Sigmoid colon (tissue), 7 donors: ENCODE measurements at regions of chr16 and their contacts with region 1.

Region 1: DNA sequence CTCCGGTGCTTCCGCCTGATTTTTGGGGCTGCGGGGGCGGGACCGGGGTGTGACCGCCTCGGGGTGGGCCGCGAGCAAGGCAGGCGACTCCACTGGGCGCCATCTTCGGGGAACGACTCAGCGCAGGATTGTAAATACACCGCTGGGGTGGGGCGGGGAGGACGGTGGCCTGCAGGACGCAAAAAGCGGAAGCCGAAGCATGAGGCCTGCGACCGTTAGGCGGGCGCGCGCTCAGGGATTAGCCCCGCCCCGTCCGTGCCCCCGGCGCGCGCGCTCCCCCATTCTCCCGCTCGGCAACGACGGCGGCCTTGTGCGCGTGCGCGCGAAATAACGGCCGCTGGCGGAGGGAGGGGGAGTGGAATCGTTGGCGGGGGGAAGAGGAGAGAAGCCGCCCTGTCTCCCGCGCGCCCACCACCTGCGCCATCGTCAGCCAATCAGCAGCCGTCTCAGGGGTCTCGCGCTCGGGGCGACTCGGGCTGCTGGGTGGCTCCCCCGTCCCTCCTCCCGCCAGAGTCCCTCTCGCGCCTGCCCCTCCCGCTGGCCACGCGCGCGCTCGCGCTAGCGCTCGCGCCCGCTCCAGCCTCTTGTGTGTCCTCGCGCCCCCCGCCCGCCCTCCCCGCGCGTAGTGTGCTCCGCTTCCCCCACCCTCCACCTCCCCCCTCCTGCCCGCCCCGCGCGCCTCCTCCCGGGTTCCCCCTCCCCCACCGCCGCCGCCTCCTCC is 791 bp upstream of the MAZ start:
- DNase-seq: peak; percentile 99
- H3K4me3 ChIP-seq: peak overlapping the region; percentile 59 to 76 (median 66)
- H3K27ac ChIP-seq: peak overlapping the region; percentile 91 to 99 (median 93)
- H3K4me1 ChIP-seq: peaks cover 0 to 44% (median 42%) of the 10 kb centered on the region in 4 donors
- H3K27me3 ChIP-seq: no peaks in the 10 kb centered on the region
- CTCF ChIP-seq: no peak
- EP300 ChIP-seq: peak in 2 of 4 donors; percentile 48 to 71
- POLR2A ChIP-seq: peak; percentile 92 to 97

Region 2: GRCh38 chr16:29720699-29721098 is 84.8 kb before region 1 on chr16:
- intact Hi-C with region 1: no loop called
- DNase-seq: no peak
- H3K4me3 ChIP-seq: no peak overlapping the region
- H3K27ac ChIP-seq: no peak overlapping the region
- H3K4me1 ChIP-seq: no peaks in the 10 kb centered on the region
- H3K27me3 ChIP-seq: no peaks in the 10 kb centered on the region
- CTCF ChIP-seq: no peak
- EP300 ChIP-seq: no peak
- POLR2A ChIP-seq: no peak

Region 3: GRCh38 chr16:29790183-29790952 is 15.2 kb before region 1 on chr16 and contains the start of gene KIF22:
- intact Hi-C with region 1: loop called (anchors 1 kb)
- DNase-seq: peak; percentile 100
- H3K4me3 ChIP-seq: peak within 1 kb of the TSS; percentile 71 to 99 (median 76)
- H3K27ac ChIP-seq: peak within 1 kb of the TSS; percentile 83 to 94 (median 88)
- H3K4me1 ChIP-seq: peaks cover 0 to 23% (median 16%) of the 10 kb centered on the region in 4 donors
- H3K27me3 ChIP-seq: no peaks in the 10 kb centered on the region
- CTCF ChIP-seq: peak; percentile 59 to 85 (median 72)
- EP300 ChIP-seq: peak in 1 of 4 donors; percentile 35
- POLR2A ChIP-seq: peak; percentile 25 to 61
- total RNA-seq, gene KIF22: 11.5 to 16.1 (median 13.7) TPM